ENCODE measurements at regions of chr20 and their contacts with region 1.

Region 1: GRCh38 chr20:64079273-64080012 is at the start of gene RGS19:
- DNase-seq: peak; percentile 86
- ATAC-seq: peak; percentile 41
- H3K4me3 Mint-ChIP-seq: peak within 1 kb of the TSS; percentile 96
- H3K27ac Mint-ChIP-seq: peak within 1 kb of the TSS; percentile 93
- H3K4me1 Mint-ChIP-seq: peaks cover 54% of the 10 kb centered on the region
- H3K27me3 Mint-ChIP-seq: peaks cover 3% of the 10 kb centered on the region
- total RNA-seq, gene RGS19: 130 to 135 TPM

Region 2: DNA sequence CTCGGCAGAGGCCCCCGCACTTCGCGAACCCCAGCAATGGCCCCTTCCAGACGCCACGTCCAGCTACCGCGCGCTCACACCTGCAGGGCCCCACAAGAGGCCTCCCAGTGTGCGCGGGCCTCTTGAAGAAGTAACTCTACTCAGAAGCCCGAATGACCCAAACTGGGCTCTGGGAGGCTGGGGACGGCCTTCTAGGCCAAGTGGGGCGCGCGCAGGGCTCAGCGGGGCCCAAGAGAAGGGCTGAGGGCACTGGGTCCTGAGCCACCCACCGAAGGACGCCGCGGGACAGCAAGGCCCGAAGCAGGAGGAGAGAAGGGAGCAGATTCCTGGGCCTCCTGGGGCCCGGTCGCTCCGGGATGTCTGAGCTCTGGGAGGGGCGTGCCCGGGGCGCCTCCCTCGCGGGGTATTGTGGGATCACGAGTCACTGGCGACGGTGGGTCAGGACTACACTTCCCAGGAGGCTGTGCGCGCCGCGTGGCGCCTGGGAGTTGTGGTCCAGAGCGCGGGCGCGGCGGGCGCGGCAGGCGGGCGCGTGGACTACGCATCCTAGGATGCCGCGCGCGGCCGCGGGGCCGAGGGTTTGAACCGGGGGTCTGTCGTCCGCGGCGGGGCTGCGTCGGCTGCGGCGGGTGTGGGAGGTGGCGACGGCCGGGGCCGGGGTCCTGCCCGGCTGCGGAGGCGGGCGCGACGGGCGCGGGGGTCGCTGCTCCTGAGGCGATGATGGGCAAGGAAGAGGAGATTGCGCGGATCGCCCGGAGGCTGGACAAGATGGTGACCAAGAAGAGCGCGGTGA is 16.7 kb before region 1 on chr20 and contains the start of gene TCEA2:
- CTCF ChIA-PET with region 1: interaction called, 8 read pairs
- POLR2A ChIA-PET with region 1: interaction called, 11 read pairs
- DNase-seq: peak; percentile 97
- ATAC-seq: peak; percentile 82
- H3K4me3 Mint-ChIP-seq: peak within 1 kb of the TSS; percentile 85
- H3K27ac Mint-ChIP-seq: peak within 1 kb of the TSS; percentile 86
- H3K4me1 Mint-ChIP-seq: peaks cover 56% of the 10 kb centered on the region
- H3K27me3 Mint-ChIP-seq: no peaks in the 10 kb centered on the region
- total RNA-seq, gene TCEA2: 49.6 to 55.3 TPM

Region 3: DNA sequence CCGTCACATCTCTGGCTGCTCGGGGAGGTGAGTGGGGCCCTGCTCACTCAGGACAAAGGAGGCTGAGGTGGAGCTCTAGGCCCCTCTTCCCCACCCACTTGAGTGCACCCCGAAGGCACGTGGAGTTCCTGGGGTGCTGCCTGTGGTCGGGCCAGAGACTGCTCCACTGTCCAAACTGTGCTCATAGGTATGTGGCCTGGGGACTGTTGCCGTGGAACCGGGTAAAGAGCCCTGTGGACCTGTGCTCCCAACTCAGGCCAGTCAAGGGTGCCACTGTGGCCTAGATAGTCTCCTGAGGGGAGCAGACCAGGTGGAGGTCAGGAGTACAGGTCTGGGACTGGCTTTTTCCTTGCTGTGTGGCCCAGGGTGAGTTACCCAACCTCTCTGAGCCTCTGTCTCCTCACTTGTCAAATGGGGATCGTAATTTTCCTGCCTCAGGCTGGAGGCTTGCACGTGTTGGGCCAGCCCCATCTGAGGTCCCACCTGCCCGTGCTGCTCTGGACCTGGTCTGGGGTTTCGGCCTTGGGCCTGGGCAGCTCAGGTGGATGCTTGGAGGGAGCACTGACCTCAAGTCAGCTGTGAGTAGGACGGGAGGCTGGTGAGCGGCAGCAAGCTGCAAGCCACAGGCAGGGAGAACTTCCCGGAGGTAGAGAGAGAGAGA is 40.4 kb after region 1 on chr20:
- CTCF ChIA-PET with region 1: interaction called, 48 read pairs
- POLR2A ChIA-PET with region 1: interaction called, 3 read pairs
- DNase-seq: no peak
- ATAC-seq: peak; percentile 39
- H3K4me3 Mint-ChIP-seq: peak overlapping the region; percentile 63
- H3K27ac Mint-ChIP-seq: peak overlapping the region; percentile 87
- H3K4me1 Mint-ChIP-seq: peaks cover 10% of the 10 kb centered on the region
- H3K27me3 Mint-ChIP-seq: peaks cover 14% of the 10 kb centered on the region

Region 4: DNA sequence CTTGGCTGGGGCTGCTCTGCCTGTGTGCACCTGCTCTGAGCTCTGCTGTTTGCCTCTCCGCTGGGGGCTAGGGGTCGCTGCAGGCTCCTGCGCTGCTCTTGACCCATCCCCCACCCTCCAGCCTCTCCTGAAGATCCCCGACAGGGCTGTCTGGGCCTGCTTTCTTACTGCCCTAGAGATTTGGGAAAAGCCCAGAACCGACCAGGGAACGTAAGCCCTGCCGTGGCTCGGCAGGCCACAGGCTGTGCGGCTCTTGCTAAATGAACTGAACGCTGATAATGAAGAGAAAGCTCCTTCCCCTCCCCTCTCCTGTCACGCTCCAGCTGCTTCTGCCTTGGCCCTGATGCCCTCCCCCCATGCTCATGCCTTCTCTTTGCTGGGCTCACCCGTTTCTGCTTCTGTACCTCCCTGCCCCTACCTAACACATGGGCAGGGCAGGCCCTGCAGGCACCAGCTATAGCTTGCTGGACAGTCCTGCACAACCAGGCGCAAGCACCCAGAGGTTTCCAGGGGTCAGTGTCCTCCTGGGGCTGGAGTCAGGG is 144.2 kb after region 1 on chr20:
- CTCF ChIA-PET with region 1: no interaction called
- POLR2A ChIA-PET with region 1: no interaction called
- DNase-seq: no peak
- ATAC-seq: no peak
- H3K4me3 Mint-ChIP-seq: no peak overlapping the region
- H3K27ac Mint-ChIP-seq: no peak overlapping the region
- H3K4me1 Mint-ChIP-seq: peaks cover 3% of the 10 kb centered on the region
- H3K27me3 Mint-ChIP-seq: peaks cover 4% of the 10 kb centered on the region